ENCODE measurements at regions of chr13 and their contacts with region 1.

Region 1: DNA sequence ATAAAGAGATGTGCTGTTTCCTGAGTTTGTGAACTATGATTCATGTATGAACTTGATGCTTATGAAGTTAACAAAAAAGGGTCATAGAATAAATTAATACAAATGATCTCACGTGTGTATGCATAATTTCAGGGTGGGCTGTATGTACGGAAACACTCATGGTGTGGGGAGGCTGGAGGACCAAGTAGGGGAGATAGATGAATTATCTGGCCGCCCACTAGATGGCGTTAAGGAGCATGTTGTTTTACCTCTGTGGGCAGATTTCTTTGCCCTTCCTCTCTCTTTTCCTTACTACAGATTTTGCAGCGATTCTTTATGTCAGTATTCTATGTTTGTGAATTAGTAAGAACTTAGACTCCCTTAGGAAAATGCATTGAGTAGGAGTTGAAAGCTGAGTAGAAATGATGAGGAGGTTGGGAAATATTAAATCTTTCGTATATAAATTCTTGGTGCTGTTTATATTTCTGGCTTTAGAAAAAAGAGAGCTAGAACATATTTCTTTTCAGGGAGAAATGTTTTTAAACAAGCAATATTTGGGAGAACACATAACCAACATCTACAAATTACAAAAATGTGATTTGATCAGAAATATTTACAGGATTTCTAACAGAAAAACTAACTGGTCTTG is 47.4 kb upstream of the TMTC4 start:
- DNase-seq: no peak
- H3K4me3 ChIP-seq: no peak overlapping the region
- H3K27ac ChIP-seq: no peak overlapping the region
- H3K4me1 ChIP-seq: peaks cover 0 to 25% (median 0%) of the 10 kb centered on the region in 3 donors
- H3K27me3 ChIP-seq: no peaks in the 10 kb centered on the region
- CTCF ChIP-seq: peak; percentile 19 to 70 (median 57)
- POLR2A ChIP-seq: no peak

Region 2: DNA sequence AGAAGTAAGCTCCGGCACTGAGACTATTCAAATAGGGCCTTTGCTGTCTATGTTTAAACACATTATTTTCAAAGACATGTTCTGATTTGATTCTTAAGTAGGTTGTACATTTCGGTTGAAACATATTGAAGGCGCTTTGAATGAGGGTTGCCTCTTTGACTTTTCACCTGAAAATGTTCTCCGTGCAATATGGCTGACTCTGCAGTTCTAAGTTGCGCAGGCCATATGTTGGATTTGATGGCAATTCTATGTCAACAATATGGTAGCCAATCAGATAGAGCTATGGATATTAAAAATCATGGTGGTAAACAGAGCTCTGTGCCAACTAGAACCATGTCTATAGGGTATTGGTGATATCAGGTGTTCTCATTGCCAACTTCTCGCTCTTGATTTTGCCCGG is 387.0 kb after region 1 on chr13:
- intact Hi-C with region 1: loop called (anchors 10 kb)
- DNase-seq: no peak
- H3K4me3 ChIP-seq: no peak overlapping the region
- H3K27ac ChIP-seq: no peak overlapping the region
- H3K4me1 ChIP-seq: no peaks in the 10 kb centered on the region
- H3K27me3 ChIP-seq: peaks cover 0 to 8% (median 0%) of the 10 kb centered on the region in 4 donors
- CTCF ChIP-seq: no peak
- POLR2A ChIP-seq: no peak